ENCODE measurements at regions of chr4 and their contacts with region 1.

Region 1: GRCh38 chr4:39032218-39033085 is at the start of gene TMEM156:
- DNase-seq: peak; percentile 81
- H3K4me3 Mint-ChIP-seq: peak within 1 kb of the TSS; percentile 88
- H3K27ac Mint-ChIP-seq: peak within 1 kb of the TSS; percentile 89
- H3K4me1 Mint-ChIP-seq: peaks cover 37% of the 10 kb centered on the region
- H3K27me3 Mint-ChIP-seq: no peaks in the 10 kb centered on the region
- total RNA-seq, gene TMEM156: 25.9 and 26.9 TPM in 2 replicates

Region 2: GRCh38 chr4:38902695-38903094 is 129.8 kb before region 1 on chr4:
- intact Hi-C with region 1: loop called (anchors 5 kb)
- DNase-seq: no peak
- H3K4me3 Mint-ChIP-seq: no peak overlapping the region
- H3K27ac Mint-ChIP-seq: no peak overlapping the region
- H3K4me1 Mint-ChIP-seq: peaks cover 15% of the 10 kb centered on the region
- H3K27me3 Mint-ChIP-seq: no peaks in the 10 kb centered on the region

Region 3: GRCh38 chr4:38958453-38959190 is 73.8 kb before region 1 on chr4:
- intact Hi-C with region 1: loop called (anchors 1 kb)
- DNase-seq: no peak
- H3K4me3 Mint-ChIP-seq: peak overlapping the region; percentile 56
- H3K27ac Mint-ChIP-seq: peak overlapping the region; percentile 97
- H3K4me1 Mint-ChIP-seq: peaks cover 41% of the 10 kb centered on the region
- H3K27me3 Mint-ChIP-seq: no peaks in the 10 kb centered on the region

Region 4: DNA sequence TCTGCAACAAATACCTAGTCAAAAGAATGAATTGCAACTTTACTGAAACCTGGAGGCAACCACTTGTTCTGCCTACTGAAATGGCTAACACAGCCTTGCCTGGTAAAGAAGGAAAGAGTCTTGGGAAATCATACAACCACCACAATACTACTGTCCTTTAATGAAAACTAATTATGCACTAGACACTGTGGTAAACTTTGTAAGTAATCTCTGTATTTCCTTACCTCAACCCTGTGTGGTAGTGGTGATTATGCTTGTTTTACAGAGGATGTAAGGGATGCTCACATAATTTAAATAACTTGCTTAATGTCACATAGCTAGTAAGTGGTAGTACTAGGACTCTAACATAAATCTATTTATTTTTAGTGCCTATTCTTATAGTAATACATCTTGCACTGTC is 45.0 kb before region 1 on chr4:
- intact Hi-C with region 1: loop called (anchors 1 kb)
- DNase-seq: no peak
- H3K4me3 Mint-ChIP-seq: peak overlapping the region; percentile 43
- H3K27ac Mint-ChIP-seq: peak overlapping the region; percentile 82
- H3K4me1 Mint-ChIP-seq: peaks cover 61% of the 10 kb centered on the region
- H3K27me3 Mint-ChIP-seq: no peaks in the 10 kb centered on the region

Region 5: DNA sequence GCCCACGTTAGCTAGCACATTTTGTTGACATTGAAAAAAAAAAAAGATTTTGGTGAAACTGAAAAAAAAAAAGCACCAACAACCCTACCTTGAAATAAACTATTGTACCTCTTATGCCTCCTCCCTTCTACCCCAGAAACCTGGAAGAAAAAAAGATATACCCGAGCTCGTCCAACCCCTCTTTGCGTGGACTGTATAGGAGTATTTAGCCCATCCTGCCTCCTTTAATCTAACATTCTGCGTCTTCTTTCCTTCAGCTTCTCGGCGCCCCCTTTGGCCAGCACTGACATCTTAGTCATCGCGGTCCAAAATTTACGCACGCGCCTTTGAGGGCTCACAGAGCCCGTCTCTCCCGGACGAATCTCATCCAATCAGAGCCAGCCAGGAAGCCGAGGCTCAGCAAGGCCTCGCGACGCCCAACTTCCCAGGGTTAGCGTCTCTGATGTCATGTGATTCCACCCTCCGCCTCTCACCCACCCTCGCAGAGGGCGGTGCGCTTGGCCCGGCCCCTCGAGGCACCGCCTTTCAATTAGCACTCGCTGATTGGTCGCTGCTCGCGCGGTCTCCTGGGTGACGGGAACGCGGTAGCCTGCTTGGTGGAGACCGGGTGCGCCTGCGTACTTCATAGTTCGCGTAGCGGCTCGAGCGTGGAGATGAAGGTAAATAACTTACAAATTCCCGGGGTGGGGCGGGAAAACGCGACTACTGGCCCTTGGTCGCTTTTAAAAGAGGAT is 149.6 kb after region 1 on chr4 and contains the start of gene WDR19:
- intact Hi-C with region 1: loop called (anchors 5 kb)
- DNase-seq: peak; percentile 100
- H3K4me3 Mint-ChIP-seq: no peak within 1 kb of the TSS
- H3K27ac Mint-ChIP-seq: no peak within 1 kb of the TSS
- H3K4me1 Mint-ChIP-seq: peaks cover 7% of the 10 kb centered on the region
- H3K27me3 Mint-ChIP-seq: peaks cover 6% of the 10 kb centered on the region
- total RNA-seq, gene WDR19: 12.1 and 15.6 TPM in 2 replicates

Measured in activated CD4-positive, alpha-beta T cell treated with anti-CD3 and anti-CD28 coated beads, Interleukin-2, amount 10 ng/mL, durations not matched to agents 24 days and 14 days (primary cell).